ENCODE measurements at regions of chr10 and their contacts with region 1.

Region 1: DNA sequence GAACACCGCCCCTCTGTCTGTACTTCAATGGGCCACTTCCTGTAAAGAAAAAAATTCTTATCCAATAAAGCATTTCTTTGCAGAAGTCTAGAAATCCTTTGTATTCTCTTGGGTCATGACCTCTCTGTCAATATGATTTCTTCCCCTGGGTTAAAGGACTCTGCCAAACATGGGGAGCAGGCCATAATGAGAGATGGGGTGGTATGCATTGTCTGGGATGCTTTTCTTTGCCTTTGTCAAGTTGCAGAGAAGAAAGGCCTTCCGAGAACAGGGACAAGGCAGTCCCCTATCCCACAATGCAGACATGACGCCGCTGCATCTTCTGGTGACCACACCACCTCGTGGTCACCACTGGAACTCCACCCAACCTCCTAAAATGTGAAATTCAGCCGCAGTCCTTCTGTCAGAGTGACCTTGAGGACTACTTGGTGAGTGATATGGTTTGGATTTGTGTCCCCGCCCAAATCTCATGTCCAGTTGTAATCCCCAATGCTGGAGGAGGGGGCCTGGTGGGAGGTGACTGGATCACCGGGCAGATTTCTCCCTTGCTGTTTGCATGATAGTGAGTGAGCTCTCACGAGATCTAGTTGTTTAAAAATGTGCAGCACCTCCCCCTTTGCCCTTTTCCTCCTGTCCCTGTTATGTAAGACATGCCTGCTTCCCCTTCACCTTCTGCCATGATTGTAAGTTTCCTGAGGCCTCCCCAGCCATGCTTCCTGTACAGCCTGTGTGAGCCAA is 15.2 kb upstream of the FRMPD2 start:
- DNase-seq: peak; percentile 50
- ATAC-seq: peak; percentile 49
- H3K4me3 Mint-ChIP-seq: no peak overlapping the region
- H3K27ac Mint-ChIP-seq: no peak overlapping the region
- H3K4me1 Mint-ChIP-seq: peaks cover 32% of the 10 kb centered on the region
- H3K27me3 Mint-ChIP-seq: peaks cover 6% of the 10 kb centered on the region

Region 2: DNA sequence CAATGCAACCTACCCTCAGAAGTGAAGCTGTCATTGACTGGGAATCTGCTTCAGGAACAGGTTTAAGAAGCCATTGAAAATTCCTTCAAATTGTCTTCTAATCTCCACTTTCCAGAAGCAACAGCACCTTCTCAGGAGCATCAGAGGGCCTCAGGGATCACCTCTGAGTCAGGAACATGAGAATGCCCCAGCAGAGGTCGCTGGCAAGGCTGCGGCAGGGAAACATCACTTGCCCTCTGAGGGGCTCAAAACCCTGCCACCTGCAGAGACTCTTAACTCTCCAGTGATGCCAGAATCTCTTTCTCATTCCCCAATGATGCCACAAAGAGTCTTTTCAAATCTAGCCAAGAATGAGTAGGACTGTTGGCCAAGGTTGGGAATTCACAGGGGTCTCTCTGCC is 10.9 kb after region 1 on chr10:
- CTCF ChIA-PET with region 1: interaction called, 12 read pairs
- POLR2A ChIA-PET with region 1: no interaction called
- DNase-seq: no peak
- ATAC-seq: no peak
- H3K4me3 Mint-ChIP-seq: no peak overlapping the region
- H3K27ac Mint-ChIP-seq: no peak overlapping the region
- H3K4me1 Mint-ChIP-seq: peaks cover 11% of the 10 kb centered on the region
- H3K27me3 Mint-ChIP-seq: peaks cover 2% of the 10 kb centered on the region

Measured in activated CD8-positive, alpha-beta T cell treated with anti-CD3 and anti-CD28 coated beads, Interleukin-2, amount 10 ng/mL, durations not matched to agents 7 days and 5 days (primary cell).